CD4-positive, alpha-beta memory T cell (primary cell): ENCODE measurements at regions of chr3 and their contacts with region 1.

Region 1: GRCh38 chr3:41198950-41199865 is at the start of gene CTNNB1:
- DNase-seq: peak; percentile 90 to 92 (median 91)
- H3K4me3 ChIP-seq: peak within 1 kb of the TSS; percentile 83 to 89
- H3K4me3 Mint-ChIP-seq: peak within 1 kb of the TSS; percentile 94 to 99 (median 96)
- H3K27ac ChIP-seq: peak within 1 kb of the TSS; percentile 96
- H3K27ac Mint-ChIP-seq: peak within 1 kb of the TSS; percentile 91 to 98 (median 95)
- H3K4me1 ChIP-seq: peaks cover 41% of the 10 kb centered on the region
- H3K4me1 Mint-ChIP-seq: peaks cover 28 to 43% (median 35%) of the 10 kb centered on the region in 4 donors
- H3K27me3 ChIP-seq: no peaks in the 10 kb centered on the region
- H3K27me3 Mint-ChIP-seq: peaks cover under 1 to 1% of the 10 kb centered on the region in 2 donors
- total RNA-seq, gene CTNNB1: 175 to 176 TPM

Region 2: GRCh38 chr3:41041462-41041861 is 157.7 kb before region 1 on chr3:
- CTCF ChIA-PET with region 1: no interaction called
- POLR2A ChIA-PET with region 1: no interaction called
- intact Hi-C with region 1: loop called (anchors 10 kb)
- DNase-seq: no peak
- H3K4me3 ChIP-seq: no peak overlapping the region
- H3K4me3 Mint-ChIP-seq: no peak overlapping the region
- H3K27ac ChIP-seq: no peak overlapping the region
- H3K27ac Mint-ChIP-seq: no peak overlapping the region
- H3K4me1 ChIP-seq: no peaks in the 10 kb centered on the region
- H3K4me1 Mint-ChIP-seq: no peaks in the 10 kb centered on the region
- H3K27me3 ChIP-seq: no peaks in the 10 kb centered on the region
- H3K27me3 Mint-ChIP-seq: peaks cover 16% of the 10 kb centered on the region in 2 donors

Region 3: GRCh38 chr3:41117398-41117870 is 81.8 kb before region 1 on chr3:
- CTCF ChIA-PET with region 1: no interaction called
- POLR2A ChIA-PET with region 1: interaction called, 77 read pairs
- intact Hi-C with region 1: loop called (anchors 1 kb)
- DNase-seq: peak; percentile 82 to 89 (median 88)
- H3K4me3 ChIP-seq: peak overlapping the region; percentile 10 to 31
- H3K4me3 Mint-ChIP-seq: peak overlapping the region; percentile 64 to 85 (median 77)
- H3K27ac ChIP-seq: peak overlapping the region; percentile 59
- H3K27ac Mint-ChIP-seq: peak overlapping the region; percentile 84 to 97 (median 95)
- H3K4me1 ChIP-seq: peaks cover 29% of the 10 kb centered on the region
- H3K4me1 Mint-ChIP-seq: peaks cover 20 to 35% (median 26%) of the 10 kb centered on the region in 4 donors
- H3K27me3 ChIP-seq: no peaks in the 10 kb centered on the region
- H3K27me3 Mint-ChIP-seq: no peaks in the 10 kb centered on the region

Region 4: GRCh38 chr3:41216993-41217392 is 17.8 kb after region 1 on chr3:
- CTCF ChIA-PET with region 1: interaction called, 8 read pairs
- POLR2A ChIA-PET with region 1: interaction called, 62 read pairs
- intact Hi-C with region 1: loop called (anchors 2 kb)
- DNase-seq: no peak
- H3K4me3 ChIP-seq: no peak overlapping the region
- H3K4me3 Mint-ChIP-seq: peak overlapping the region in 6 of 8 donors; percentile 10 to 88 (median 48)
- H3K27ac ChIP-seq: no peak overlapping the region
- H3K27ac Mint-ChIP-seq: peak overlapping the region in 5 of 7 donors; percentile 1 to 65 (median 24)
- H3K4me1 ChIP-seq: peaks cover 97% of the 10 kb centered on the region
- H3K4me1 Mint-ChIP-seq: peaks cover 73 to 97% (median 87%) of the 10 kb centered on the region in 4 donors
- H3K27me3 ChIP-seq: no peaks in the 10 kb centered on the region
- H3K27me3 Mint-ChIP-seq: no peaks in the 10 kb centered on the region

Region 5: DNA sequence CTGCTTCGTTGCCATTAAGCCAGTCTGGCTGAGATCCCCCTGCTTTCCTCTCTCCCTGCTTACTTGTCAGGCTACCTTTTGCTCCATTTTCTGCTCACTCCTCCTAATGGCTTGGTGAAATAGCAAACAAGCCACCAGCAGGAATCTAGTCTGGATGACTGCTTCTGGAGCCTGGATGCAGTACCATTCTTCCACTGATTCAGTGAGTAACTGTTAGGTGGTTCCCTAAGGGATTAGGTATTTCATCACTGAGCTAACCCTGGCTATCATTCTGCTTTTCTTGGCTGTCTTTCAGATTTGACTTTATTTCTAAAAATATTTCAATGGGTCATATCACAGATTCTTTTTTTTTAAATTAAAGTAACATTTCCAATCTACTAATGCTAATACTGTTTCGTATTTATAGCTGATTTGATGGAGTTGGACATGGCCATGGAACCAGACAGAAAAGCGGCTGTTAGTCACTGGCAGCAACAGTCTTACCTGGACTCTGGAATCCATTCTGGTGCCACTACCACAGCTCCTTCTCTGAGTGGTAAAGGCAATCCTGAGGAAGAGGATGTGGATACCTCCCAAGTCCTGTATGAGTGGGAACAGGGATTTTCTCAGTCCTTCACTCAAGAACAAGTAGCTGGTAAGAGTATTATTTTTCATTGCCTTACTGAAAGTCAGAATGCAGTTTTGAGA is 25.1 kb after region 1 on chr3:
- CTCF ChIA-PET with region 1: interaction called, 4 read pairs
- POLR2A ChIA-PET with region 1: interaction called, 19 read pairs
- intact Hi-C with region 1: no loop called
- DNase-seq: no peak
- H3K4me3 ChIP-seq: no peak overlapping the region
- H3K4me3 Mint-ChIP-seq: no peak overlapping the region
- H3K27ac ChIP-seq: no peak overlapping the region
- H3K27ac Mint-ChIP-seq: peak overlapping the region in 2 of 7 donors; percentile 24 to 41
- H3K4me1 ChIP-seq: peaks cover 35% of the 10 kb centered on the region
- H3K4me1 Mint-ChIP-seq: peaks cover 45 to 77% (median 59%) of the 10 kb centered on the region in 4 donors
- H3K27me3 ChIP-seq: no peaks in the 10 kb centered on the region
- H3K27me3 Mint-ChIP-seq: no peaks in the 10 kb centered on the region

Region 6: DNA sequence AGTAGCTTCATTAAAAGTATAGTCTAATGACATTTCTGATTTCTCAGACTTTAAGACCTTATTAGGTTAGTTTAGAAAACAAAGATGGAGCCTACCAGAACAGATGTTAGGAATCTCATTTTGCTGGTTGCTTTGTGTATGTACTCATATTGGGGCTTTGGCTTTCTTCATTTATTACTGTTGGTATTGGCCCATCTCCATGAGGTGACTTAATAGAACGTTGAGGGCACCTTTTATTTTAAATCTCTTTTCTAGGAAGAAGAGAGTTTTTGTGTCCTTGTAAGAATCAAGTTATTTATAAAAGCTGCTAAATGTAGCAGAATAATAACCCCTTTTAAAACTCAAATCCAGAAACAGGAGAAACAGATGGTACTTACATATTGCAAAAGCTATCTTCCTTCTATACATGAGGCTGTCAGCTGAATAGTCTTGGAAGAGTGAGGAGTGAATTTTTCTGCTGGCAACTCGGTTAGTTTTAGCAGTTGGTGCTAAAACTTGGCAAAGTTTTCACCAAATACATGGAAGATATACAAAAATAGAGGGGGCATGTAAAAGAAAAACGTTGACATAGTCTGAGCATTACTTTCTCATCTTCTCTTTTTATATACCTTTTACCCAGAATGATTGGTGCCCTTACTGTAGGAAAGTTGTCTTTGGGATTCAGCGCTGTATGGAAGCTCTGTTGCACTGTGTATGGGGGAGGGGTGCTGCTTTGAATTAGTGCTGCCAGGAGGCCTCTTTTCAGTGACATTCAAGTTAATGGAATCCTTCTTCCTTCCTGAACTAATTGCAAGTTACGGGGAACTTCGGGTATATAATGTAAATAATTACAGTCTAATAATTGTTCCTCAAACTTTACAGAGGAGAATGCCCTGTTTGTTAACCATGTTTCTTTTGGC is 35.9 kb after region 1 on chr3:
- CTCF ChIA-PET with region 1: no interaction called
- POLR2A ChIA-PET with region 1: interaction called, 8 read pairs
- intact Hi-C with region 1: loop called (anchors 5 kb)
- DNase-seq: no peak
- H3K4me3 ChIP-seq: no peak overlapping the region
- H3K4me3 Mint-ChIP-seq: peak overlapping the region in 1 of 8 donors; percentile 42
- H3K27ac ChIP-seq: no peak overlapping the region
- H3K27ac Mint-ChIP-seq: peak overlapping the region in 3 of 7 donors; percentile 53 to 66 (median 62)
- H3K4me1 ChIP-seq: no peaks in the 10 kb centered on the region
- H3K4me1 Mint-ChIP-seq: peaks cover 4 to 7% (median 6%) of the 10 kb centered on the region in 4 donors
- H3K27me3 ChIP-seq: no peaks in the 10 kb centered on the region
- H3K27me3 Mint-ChIP-seq: no peaks in the 10 kb centered on the region

Region 7: DNA sequence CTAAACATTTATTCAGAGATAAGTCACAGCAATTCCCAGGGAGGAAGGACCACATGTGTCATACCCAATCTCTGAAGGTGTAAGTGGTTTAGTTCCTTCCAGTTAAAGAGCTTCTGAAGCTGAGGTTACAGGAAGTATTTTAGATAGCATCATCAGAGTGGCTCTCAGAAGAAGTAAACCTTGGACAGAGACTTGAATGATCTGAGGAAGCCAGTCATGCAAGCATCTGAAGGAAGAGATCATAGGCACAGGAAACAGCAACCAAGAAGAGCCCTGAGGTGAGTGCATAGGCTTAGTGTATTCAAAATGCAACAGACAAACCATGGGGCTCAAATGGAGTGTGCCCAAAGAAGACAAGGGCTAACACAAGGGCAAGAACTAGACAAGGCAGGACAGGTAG is 552.4 kb after region 1 on chr3:
- CTCF ChIA-PET with region 1: no interaction called
- POLR2A ChIA-PET with region 1: no interaction called
- intact Hi-C with region 1: no loop called
- DNase-seq: peak in 3 of 5 donors; percentile 0 to 13 (median 1)
- H3K4me3 ChIP-seq: no peak overlapping the region
- H3K4me3 Mint-ChIP-seq: no peak overlapping the region
- H3K27ac ChIP-seq: no peak overlapping the region
- H3K27ac Mint-ChIP-seq: peak overlapping the region in 1 of 7 donors; percentile 24
- H3K4me1 ChIP-seq: no peaks in the 10 kb centered on the region
- H3K4me1 Mint-ChIP-seq: peaks cover 11 to 15% (median 13%) of the 10 kb centered on the region in 4 donors
- H3K27me3 ChIP-seq: no peaks in the 10 kb centered on the region
- H3K27me3 Mint-ChIP-seq: no peaks in the 10 kb centered on the region

Region 8: DNA sequence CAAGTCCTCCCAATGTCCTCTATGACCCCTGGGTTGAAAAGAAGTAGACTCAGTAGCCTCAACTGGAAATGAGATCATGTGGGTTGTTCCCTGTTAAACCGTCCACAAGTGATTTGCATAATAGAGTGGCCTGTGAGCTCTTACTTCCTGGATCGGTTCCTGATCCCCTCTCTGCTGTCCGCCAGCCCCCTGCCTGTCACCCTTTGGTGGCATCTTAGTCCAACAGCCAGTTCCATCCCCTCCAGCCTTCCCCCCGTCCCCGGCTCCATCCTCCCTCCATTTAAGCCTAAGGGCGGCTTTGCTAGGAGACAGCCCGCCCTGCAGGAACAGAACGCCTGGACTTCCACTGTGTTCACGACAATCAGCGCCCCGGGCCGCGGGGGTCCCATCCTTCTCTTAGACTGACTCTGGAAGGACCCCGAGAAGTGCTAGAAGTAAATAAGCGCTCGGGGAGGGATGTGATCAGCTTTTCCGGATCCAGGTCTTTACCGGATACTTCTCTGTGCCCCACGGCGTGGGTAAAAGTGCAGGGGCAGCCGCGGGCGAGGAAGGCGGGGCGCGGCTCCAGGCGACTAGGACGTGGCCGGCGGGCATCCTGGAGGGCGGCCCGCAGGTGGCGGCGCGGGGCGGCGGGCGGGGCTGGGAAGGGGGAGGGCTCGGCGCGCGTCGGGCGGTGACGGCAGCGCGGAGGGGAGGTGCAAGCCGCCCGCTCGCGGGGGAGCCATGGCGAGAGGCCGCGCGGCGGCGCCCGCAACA is 813.9 kb after region 1 on chr3:
- CTCF ChIA-PET with region 1: no interaction called
- POLR2A ChIA-PET with region 1: interaction called, 5 read pairs
- intact Hi-C with region 1: loop called (anchors 1 kb)
- DNase-seq: peak; percentile 64 to 70 (median 66)
- H3K4me3 ChIP-seq: peak overlapping the region; percentile 50 to 85
- H3K4me3 Mint-ChIP-seq: peak overlapping the region; percentile 87 to 96 (median 92)
- H3K27ac ChIP-seq: peak overlapping the region; percentile 63
- H3K27ac Mint-ChIP-seq: peak overlapping the region; percentile 95 to 98 (median 97)
- H3K4me1 ChIP-seq: peaks cover 32% of the 10 kb centered on the region
- H3K4me1 Mint-ChIP-seq: peaks cover 24 to 45% (median 36%) of the 10 kb centered on the region in 4 donors
- H3K27me3 ChIP-seq: no peaks in the 10 kb centered on the region
- H3K27me3 Mint-ChIP-seq: no peaks in the 10 kb centered on the region